CD14-positive monocyte (primary cell): ENCODE measurements at regions of chr17 and their contacts with region 1.

Region 1: GRCh38 chr17:38428112-38428642 is at the start of gene ARHGAP23:
- DNase-seq: no peak
- H3K4me3 ChIP-seq: peak within 1 kb of the TSS; percentile 50 to 88 (median 87)
- H3K4me3 Mint-ChIP-seq: peak within 1 kb of the TSS; percentile 76 to 86
- H3K27ac ChIP-seq: no peak within 1 kb of the TSS
- H3K27ac Mint-ChIP-seq: peak within 1 kb of the TSS in 3 of 7 donors; percentile 2 to 68 (median 68)
- H3K4me1 ChIP-seq: peaks cover 26 to 37% of the 10 kb centered on the region in 2 donors
- H3K4me1 Mint-ChIP-seq: peaks cover 47% of the 10 kb centered on the region
- H3K27me3 ChIP-seq: peaks cover 0 to 9% of the 10 kb centered on the region in 2 donors
- H3K27me3 Mint-ChIP-seq: peaks cover 10 to 29% (median 23%) of the 10 kb centered on the region in 3 donors
- CTCF ChIP-seq: no peak
- polyA plus RNA-seq, gene ARHGAP23: 0.03 to 0.21 (median 0.09) TPM

Region 2: GRCh38 chr17:38485146-38485468 is 56.9 kb after region 1 on chr17:
- intact Hi-C with region 1: loop called (anchors 5 to 10 kb)
- DNase-seq: no peak
- H3K4me3 ChIP-seq: no peak overlapping the region
- H3K4me3 Mint-ChIP-seq: no peak overlapping the region
- H3K27ac ChIP-seq: no peak overlapping the region
- H3K27ac Mint-ChIP-seq: no peak overlapping the region
- H3K4me1 ChIP-seq: no peaks in the 10 kb centered on the region
- H3K4me1 Mint-ChIP-seq: peaks cover 2% of the 10 kb centered on the region
- H3K27me3 ChIP-seq: no peaks in the 10 kb centered on the region
- H3K27me3 Mint-ChIP-seq: no peaks in the 10 kb centered on the region
- CTCF ChIP-seq: peak; percentile 0